Activated T-helper 1 cell treated with anti-CD3 and anti-CD28 coated beads, Interleukin-12 subunit alpha, Interleukin-12 subunit beta, Interleukin-2, Interleukin-4 antibody, amounts not matched to agents 30 ng/mL and 10 ng/mL and 1 ng/mL, durations not matched to agents 14 hours and 24 hours and 36 hours (primary cell): ENCODE measurements at regions of chr10 and their contacts with region 1.

Region 1: DNA sequence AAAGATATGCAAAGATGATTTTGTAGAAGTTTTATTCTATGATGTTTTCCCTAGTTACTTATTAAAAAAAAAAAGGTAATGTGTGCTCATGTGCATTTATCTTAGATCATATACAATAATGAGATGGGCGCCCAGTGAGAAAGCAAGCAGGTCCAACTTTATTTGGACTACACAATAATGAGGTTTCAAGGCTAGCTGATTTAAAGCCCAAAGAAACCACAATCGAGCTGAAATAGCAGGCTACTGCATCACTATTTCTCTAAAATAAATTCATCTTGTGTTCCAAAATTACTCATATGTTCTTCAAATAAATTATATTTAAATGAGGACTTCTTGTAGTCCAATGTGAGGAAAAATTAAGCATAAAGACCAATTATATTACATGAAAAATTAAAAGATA is 110.1 kb downstream of the JMJD1C start:
- DNase-seq: no peak
- H3K4me3 Mint-ChIP-seq: no peak overlapping the region
- H3K27ac Mint-ChIP-seq: peak overlapping the region; percentile 54
- H3K4me1 Mint-ChIP-seq: peaks cover 14% of the 10 kb centered on the region
- H3K27me3 Mint-ChIP-seq: no peaks in the 10 kb centered on the region

Region 2: DNA sequence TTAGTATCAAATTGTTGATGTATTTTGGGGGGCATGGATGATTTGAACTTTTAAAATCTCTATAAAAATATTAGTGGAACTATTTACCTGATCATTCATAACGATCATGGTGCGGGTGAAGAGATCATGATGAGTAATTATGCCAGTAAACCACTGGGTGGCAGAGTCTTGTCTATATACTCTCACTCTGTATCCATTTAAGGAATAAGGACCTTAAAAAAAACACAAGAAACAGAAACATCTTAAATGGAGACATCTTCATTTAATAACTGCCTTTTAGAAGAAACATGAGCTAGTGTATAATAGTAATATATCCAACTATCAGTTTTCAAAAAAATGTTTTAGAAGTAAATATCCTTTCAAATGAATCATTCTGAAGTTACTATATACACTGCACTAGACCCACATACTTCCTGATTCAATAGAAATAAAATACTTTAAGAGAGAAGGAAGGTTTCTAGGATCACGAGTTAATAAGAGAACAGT is 138.5 kb before region 1 on chr10:
- intact Hi-C with region 1: loop called (anchors 2 kb)
- DNase-seq: no peak
- H3K4me3 Mint-ChIP-seq: no peak overlapping the region
- H3K27ac Mint-ChIP-seq: peak overlapping the region; percentile 13
- H3K4me1 Mint-ChIP-seq: peaks cover 51% of the 10 kb centered on the region
- H3K27me3 Mint-ChIP-seq: no peaks in the 10 kb centered on the region

Region 3: GRCh38 chr10:63227207-63227915 is 128.3 kb before region 1 on chr10:
- intact Hi-C with region 1: loop called (anchors 2 kb)
- DNase-seq: no peak
- H3K4me3 Mint-ChIP-seq: peak overlapping the region; percentile 61
- H3K27ac Mint-ChIP-seq: peak overlapping the region; percentile 79
- H3K4me1 Mint-ChIP-seq: peaks cover 34% of the 10 kb centered on the region
- H3K27me3 Mint-ChIP-seq: no peaks in the 10 kb centered on the region

Region 4: GRCh38 chr10:63388421-63389031 is 32.8 kb after region 1 on chr10:
- intact Hi-C with region 1: loop called (anchors 1 kb)
- DNase-seq: no peak
- H3K4me3 Mint-ChIP-seq: peak overlapping the region; percentile 48
- H3K27ac Mint-ChIP-seq: peak overlapping the region; percentile 31
- H3K4me1 Mint-ChIP-seq: peaks cover 55% of the 10 kb centered on the region
- H3K27me3 Mint-ChIP-seq: peaks cover 2% of the 10 kb centered on the region

Region 5: DNA sequence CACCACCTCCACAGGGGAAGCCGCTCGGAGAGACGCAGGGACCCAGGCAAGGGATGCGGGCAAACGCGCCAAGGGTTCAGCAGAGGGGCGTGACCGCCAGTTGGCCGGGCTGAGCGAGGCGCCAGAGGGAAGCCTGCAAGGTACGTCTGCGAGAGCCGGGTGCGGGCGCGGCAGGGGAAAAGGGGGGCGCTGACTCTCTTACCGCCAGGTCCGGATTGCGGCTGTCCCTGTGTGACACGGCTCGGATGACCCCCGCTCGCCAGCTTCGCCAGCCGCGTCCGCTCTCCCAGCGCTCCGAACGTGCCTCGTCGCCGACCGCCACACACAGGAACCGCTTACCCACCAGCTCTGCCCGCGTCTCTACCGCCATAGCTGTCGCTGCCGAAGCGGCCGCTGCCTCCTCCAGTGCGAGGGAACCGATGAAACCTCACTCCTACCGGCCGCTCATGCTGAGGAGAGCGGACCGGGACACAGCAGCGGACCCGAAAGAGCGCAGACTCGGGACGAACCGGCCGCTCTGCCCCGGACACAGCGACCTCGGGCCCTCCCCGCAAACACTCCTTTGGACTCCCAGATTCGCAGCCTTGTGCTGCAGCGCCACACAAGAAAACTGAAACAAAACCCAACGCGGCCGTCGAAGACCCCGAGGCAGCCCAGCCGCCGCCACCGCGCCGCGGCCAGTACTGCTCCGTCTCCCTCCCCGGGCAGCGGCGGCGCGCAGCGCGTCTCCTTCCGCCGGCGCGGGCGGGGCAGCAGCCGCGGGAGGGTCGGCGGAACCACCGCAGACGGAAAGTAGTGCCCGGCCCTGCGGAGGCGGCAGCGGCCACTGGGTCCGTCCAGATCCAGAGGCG is 109.8 kb after region 1 on chr10 and contains the start of gene JMJD1C:
- intact Hi-C with region 1: loop called (anchors 10 kb)
- DNase-seq: peak; percentile 47
- H3K4me3 Mint-ChIP-seq: peak within 1 kb of the TSS; percentile 90
- H3K27ac Mint-ChIP-seq: peak within 1 kb of the TSS; percentile 68
- H3K4me1 Mint-ChIP-seq: peaks cover 21% of the 10 kb centered on the region
- H3K27me3 Mint-ChIP-seq: peaks cover 28% of the 10 kb centered on the region
- total RNA-seq, gene JMJD1C: 47.3 and 48.0 TPM in 2 replicates

Region 6: GRCh38 chr10:63588436-63589167 is 232.9 kb after region 1 on chr10:
- intact Hi-C with region 1: no loop called
- DNase-seq: no peak
- H3K4me3 Mint-ChIP-seq: no peak overlapping the region
- H3K27ac Mint-ChIP-seq: no peak overlapping the region
- H3K4me1 Mint-ChIP-seq: no peaks in the 10 kb centered on the region
- H3K27me3 Mint-ChIP-seq: no peaks in the 10 kb centered on the region